ENCODE measurements at regions of chr1 and their contacts with region 1.

Region 1: GRCh38 chr1:96234323-96234722 is 487.3 kb upstream of the PTBP2 start:
- DNase-seq: no peak
- H3K4me3 ChIP-seq: no peak overlapping the region
- H3K27ac ChIP-seq: no peak overlapping the region
- H3K4me1 ChIP-seq: no peaks in the 10 kb centered on the region
- H3K27me3 ChIP-seq: no peaks in the 10 kb centered on the region
- CTCF ChIP-seq: no peak

Region 2: GRCh38 chr1:96721416-96722160 is 487.3 kb after region 1 on chr1 and contains the start of gene PTBP2:
- intact Hi-C with region 1: loop called (anchors 2 kb)
- DNase-seq: peak; percentile 14 to 83
- H3K4me3 ChIP-seq: peak within 1 kb of the TSS; percentile 68 to 88
- H3K27ac ChIP-seq: peak within 1 kb of the TSS; percentile 91 to 97
- H3K4me1 ChIP-seq: peaks cover 0 to 10% of the 10 kb centered on the region in 2 donors
- H3K27me3 ChIP-seq: no peaks in the 10 kb centered on the region
- CTCF ChIP-seq: no peak
- total RNA-seq, gene PTBP2: 95.9 TPM

Measured in ascending aorta (tissue), 2 donors.